Head of caudate nucleus (tissue), 42 donors: ENCODE measurements at regions of chr1 and their contacts with region 1.

Region 1: DNA sequence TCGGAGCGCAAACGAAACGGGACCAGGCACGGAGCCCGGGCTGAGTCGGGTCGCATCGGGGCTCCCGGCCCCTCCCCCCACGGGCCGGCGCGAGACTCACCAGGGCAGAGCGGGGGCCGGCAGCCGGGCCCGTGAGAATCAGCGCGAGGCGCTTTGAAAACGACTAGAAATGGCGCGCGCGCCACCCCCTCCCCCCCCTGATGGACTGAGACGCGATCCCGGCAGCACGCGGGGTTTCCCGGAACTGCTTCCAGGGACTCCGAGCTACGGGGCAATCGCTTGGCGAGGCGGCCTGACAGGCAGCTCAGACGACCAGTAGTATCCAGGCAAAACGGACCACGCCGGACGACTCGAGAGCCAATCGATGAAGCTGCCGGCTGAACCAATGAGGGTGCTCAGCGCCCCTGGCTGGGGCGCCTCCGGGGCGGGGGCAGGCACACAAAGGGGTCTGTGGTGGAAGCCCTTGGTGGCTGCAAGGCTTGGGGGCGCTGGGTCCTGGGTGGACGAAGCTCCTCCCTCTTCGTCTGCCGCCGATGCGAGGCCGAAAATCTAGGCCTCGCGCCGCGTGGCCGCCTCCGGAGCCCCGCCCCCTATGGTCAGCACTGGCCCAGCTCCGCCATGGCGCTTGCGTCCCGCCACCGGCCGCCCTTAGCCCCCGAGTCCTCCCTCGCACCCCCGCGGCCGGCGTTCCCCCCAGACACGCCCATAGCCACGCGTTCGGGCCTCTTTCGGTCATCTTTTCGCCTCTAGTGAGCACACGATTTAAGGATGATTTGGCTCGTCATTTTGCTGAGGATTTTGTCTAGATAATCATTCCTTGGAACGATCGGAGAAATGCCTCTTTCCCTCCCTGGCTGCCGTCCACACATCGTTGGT is at the start of gene HNRNPR:
- DNase-seq: peak; percentile 99 to 100 (median 100)

Region 2: DNA sequence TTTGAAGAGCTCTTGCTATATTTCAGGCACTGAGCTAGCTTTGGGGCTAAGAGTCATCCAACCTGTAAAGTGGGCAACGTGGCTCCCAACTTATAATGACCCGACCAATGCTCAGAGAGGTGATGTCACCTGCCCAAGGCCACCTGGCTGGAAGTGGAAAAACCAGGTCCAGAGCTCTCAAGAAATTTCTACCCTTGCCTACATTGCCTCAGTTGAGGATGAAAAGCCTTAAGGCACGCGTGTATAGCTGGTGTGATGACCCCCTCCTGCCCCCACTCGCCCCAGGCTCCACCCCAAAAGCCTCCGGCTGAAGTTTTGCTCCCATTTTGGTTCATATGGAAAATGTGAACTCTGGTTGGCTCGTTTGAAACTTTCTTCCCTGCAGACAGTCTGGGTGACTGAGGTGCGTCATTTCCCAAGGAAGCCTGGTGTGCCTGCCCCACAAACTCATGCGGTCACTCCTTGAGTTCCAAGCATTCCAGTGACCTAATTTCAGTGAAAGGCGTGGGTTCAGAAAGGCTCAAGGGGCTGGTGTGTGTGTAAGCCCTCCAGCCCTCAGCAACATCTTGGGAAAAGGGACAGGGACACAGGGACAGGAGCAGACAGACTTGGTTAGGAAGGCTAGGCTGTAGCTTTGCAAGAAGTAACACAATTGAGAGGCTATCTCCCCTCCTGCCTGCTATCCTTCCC is 147.6 kb before region 1 on chr1:
- intact Hi-C with region 1: no loop called
- DNase-seq: no peak

Region 3: GRCh38 chr1:23367791-23368561 is 23.6 kb after region 1 on chr1:
- intact Hi-C with region 1: loop called (anchors 1 kb)
- DNase-seq: peak; percentile 98 to 100 (median 99)